K562 (cell line): ENCODE measurements at regions of chr4 and their contacts with region 1.

Region 1: DNA sequence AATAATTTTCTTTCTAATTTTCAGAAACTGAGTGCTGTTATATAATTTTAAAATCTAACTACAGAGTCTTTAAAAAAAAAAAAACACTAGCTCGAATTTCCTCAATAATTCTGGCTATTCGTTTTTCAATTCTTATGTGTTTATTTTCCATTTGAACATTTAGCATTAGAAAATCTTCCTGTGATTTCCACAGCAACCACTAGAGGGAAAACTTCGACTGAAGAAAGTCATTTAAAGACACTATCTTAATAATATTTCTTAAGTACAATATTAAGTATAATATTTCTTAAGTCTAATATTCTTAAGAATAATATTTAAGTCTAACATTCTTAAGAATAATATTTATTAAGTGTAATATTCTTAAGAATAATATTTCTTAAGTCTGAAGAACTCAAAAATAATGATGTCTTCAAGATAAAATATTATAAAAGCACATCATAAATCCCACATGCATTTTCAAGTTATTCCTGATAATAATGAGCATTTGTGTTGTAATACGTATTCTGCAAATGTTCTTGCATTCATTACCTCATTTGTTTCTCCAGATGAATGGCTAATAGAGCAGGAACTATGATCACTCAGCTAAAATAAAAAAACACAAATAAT is 118.4 kb upstream of the WDR17 start:
- DNase-seq: peak in 1 of 4 experiments; percentile 13
- ATAC-seq: no peak
- H3K4me3 ChIP-seq: no peak overlapping the region
- H3K27ac ChIP-seq: no peak overlapping the region
- H3K4me1 ChIP-seq: no peaks in the 10 kb centered on the region
- H3K27me3 ChIP-seq: no peaks in the 10 kb centered on the region
- CTCF ChIP-seq: peak in 2 of 3 experiments; percentile 13 to 50; a peak in 2 of 6 replicates
- EP300 ChIP-seq: no peak
- POLR2A ChIP-seq: no peak
- RAD21 ChIP-seq: peak in 1 of 2 experiments; percentile 24; a peak in 3 of 4 replicates

Region 2: GRCh38 chr4:176277162-176277904 is 330.1 kb after region 1 on chr4:
- CTCF ChIA-PET with region 1: no interaction called
- POLR2A ChIA-PET with region 1: no interaction called
- in situ Hi-C with region 1: no loop called
- intact Hi-C with region 1: loop called (anchors 2 kb)
- DNase-seq: peak; percentile 36 to 66 (median 50)
- ATAC-seq: peak; percentile 97
- H3K4me3 ChIP-seq: peak overlapping the region; percentile 11; the same call in 1 of the 2 replicates
- H3K27ac ChIP-seq: no peak overlapping the region
- H3K4me1 ChIP-seq: no peaks in the 10 kb centered on the region
- H3K27me3 ChIP-seq: no peaks in the 10 kb centered on the region
- CTCF ChIP-seq: peak; percentile 52; a peak in 5 of 6 replicates
- EP300 ChIP-seq: no peak
- POLR2A ChIP-seq: no peak
- RAD21 ChIP-seq: no peak